Naive thymus-derived CD4-positive, alpha-beta T cell (primary cell): ENCODE measurements at regions of chr3 and their contacts with region 1.

Region 1: DNA sequence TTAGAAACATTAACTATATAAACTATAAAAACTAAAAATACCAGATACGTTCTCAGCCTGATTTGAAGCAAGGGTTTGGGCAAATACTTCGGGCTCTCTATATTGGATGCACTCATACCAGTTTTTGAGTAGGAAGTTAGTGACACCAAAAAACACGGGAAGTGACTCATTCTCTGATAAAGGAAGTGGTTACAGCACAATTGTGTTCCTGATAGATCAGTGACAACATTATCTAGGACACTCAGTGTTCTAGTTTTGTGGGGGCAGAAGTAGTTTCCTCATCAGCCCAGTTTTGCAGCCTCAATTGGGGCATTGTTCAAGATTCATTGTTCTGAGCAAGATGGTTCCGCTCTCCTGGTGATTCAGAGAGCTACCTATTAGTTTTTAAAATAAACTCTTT is 469.6 kb upstream of the DPPA4 start:
- DNase-seq: peak in 8 of 9 donors; percentile 28 to 76 (median 66)
- ATAC-seq: peak; percentile 94
- H3K4me3 ChIP-seq: peak overlapping the region; percentile 4
- H3K4me3 Mint-ChIP-seq: peak overlapping the region; percentile 14 to 88 (median 76)
- H3K27ac ChIP-seq: peak overlapping the region; percentile 52
- H3K27ac Mint-ChIP-seq: peak overlapping the region; percentile 85 to 97 (median 89)
- H3K4me1 ChIP-seq: peaks cover 29 to 44% of the 10 kb centered on the region in 2 donors
- H3K4me1 Mint-ChIP-seq: peaks cover 18 to 62% (median 46%) of the 10 kb centered on the region in 7 donors
- H3K27me3 ChIP-seq: no peaks in the 10 kb centered on the region
- H3K27me3 Mint-ChIP-seq: peaks cover 0 to 7% (median 0%) of the 10 kb centered on the region in 5 donors

Region 2: DNA sequence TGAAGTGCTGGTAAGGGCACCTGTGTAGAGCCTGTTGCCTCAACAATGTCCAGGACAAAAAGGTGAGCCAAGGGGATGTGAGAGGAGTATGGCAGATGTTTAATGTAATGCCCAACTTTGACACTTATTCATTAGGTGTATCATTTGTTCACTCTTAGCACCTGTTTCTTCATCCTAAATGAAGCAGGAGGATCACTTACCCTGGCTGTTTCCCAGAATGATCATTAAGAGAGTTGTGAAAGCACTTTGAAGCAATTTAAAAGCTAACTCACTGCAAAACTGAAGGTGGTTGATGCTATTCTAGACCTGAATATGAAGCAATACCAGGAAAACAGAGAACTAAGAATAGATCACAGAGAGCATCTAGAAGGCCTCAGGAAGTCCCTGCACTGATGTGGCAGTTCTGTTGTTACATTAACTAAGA is 1514.0 kb before region 1 on chr3:
- CTCF ChIA-PET with region 1: no interaction called
- POLR2A ChIA-PET with region 1: no interaction called
- intact Hi-C with region 1: loop called in 1 of 2 experiments (anchors 10 kb)
- DNase-seq: peak in 5 of 9 donors; percentile 26 to 45 (median 33)
- ATAC-seq: peak; percentile 73
- H3K4me3 ChIP-seq: no peak overlapping the region
- H3K4me3 Mint-ChIP-seq: peak overlapping the region in 8 of 10 donors; percentile 0 to 78 (median 37)
- H3K27ac ChIP-seq: peak overlapping the region; percentile 22
- H3K27ac Mint-ChIP-seq: peak overlapping the region in 8 of 9 donors; percentile 7 to 86 (median 60)
- H3K4me1 ChIP-seq: peaks cover 17 to 19% of the 10 kb centered on the region in 2 donors
- H3K4me1 Mint-ChIP-seq: peaks cover 23 to 62% (median 31%) of the 10 kb centered on the region in 7 donors
- H3K27me3 ChIP-seq: no peaks in the 10 kb centered on the region
- H3K27me3 Mint-ChIP-seq: no peaks in the 10 kb centered on the region

Region 3: GRCh38 chr3:109731620-109732473 is 75.1 kb before region 1 on chr3:
- CTCF ChIA-PET with region 1: interaction called, 3 read pairs
- POLR2A ChIA-PET with region 1: no interaction called
- intact Hi-C with region 1: loop called in 1 of 2 experiments (anchors 1 kb)
- DNase-seq: peak; percentile 11 to 68 (median 55)
- ATAC-seq: peak; percentile 87
- H3K4me3 ChIP-seq: no peak overlapping the region
- H3K4me3 Mint-ChIP-seq: no peak overlapping the region
- H3K27ac ChIP-seq: no peak overlapping the region
- H3K27ac Mint-ChIP-seq: no peak overlapping the region
- H3K4me1 ChIP-seq: no peaks in the 10 kb centered on the region
- H3K4me1 Mint-ChIP-seq: peaks cover 0 to 12% (median 4%) of the 10 kb centered on the region in 7 donors
- H3K27me3 ChIP-seq: no peaks in the 10 kb centered on the region
- H3K27me3 Mint-ChIP-seq: no peaks in the 10 kb centered on the region

Region 4: GRCh38 chr3:109784852-109785631 is 21.9 kb before region 1 on chr3:
- CTCF ChIA-PET with region 1: no interaction called
- POLR2A ChIA-PET with region 1: no interaction called
- intact Hi-C with region 1: loop called in 1 of 2 experiments (anchors 2 kb)
- DNase-seq: no peak
- ATAC-seq: no peak
- H3K4me3 ChIP-seq: no peak overlapping the region
- H3K4me3 Mint-ChIP-seq: no peak overlapping the region
- H3K27ac ChIP-seq: no peak overlapping the region
- H3K27ac Mint-ChIP-seq: no peak overlapping the region
- H3K4me1 ChIP-seq: no peaks in the 10 kb centered on the region
- H3K4me1 Mint-ChIP-seq: peaks cover 0 to 6% (median 0%) of the 10 kb centered on the region in 7 donors
- H3K27me3 ChIP-seq: no peaks in the 10 kb centered on the region
- H3K27me3 Mint-ChIP-seq: peaks cover 0 to 5% (median 0%) of the 10 kb centered on the region in 5 donors

Region 5: GRCh38 chr3:110314512-110315114 is 507.7 kb after region 1 on chr3:
- CTCF ChIA-PET with region 1: no interaction called
- POLR2A ChIA-PET with region 1: no interaction called
- intact Hi-C with region 1: loop called in 1 of 2 experiments (anchors 2 kb)
- DNase-seq: peak in 8 of 9 donors; percentile 25 to 66 (median 56)
- ATAC-seq: peak; percentile 76
- H3K4me3 ChIP-seq: no peak overlapping the region
- H3K4me3 Mint-ChIP-seq: peak overlapping the region in 1 of 10 donors; percentile 11
- H3K27ac ChIP-seq: no peak overlapping the region
- H3K27ac Mint-ChIP-seq: no peak overlapping the region
- H3K4me1 ChIP-seq: no peaks in the 10 kb centered on the region
- H3K4me1 Mint-ChIP-seq: peaks cover 0 to 5% (median 0%) of the 10 kb centered on the region in 7 donors
- H3K27me3 ChIP-seq: no peaks in the 10 kb centered on the region
- H3K27me3 Mint-ChIP-seq: peaks cover 0 to 6% (median 0%) of the 10 kb centered on the region in 5 donors

Region 6: DNA sequence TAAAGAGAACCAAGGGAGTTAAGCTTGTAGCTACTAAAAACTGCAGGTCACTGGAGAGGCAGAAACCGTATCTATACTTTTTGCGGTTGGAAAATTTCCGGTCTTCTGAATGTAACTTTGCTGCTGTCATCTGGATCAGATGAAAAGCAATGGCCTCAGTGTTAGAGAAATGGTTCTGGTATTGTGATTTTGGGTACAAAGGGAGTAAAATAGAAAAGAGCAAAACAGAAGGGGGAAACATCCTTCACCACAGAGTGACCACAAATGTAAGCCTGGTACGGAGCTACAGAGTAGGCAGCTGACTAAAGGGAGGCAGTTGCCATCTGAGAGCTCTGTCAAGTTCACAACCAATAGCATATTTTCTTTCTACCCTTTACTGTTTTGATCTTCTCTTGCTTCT is 1740.7 kb after region 1 on chr3:
- CTCF ChIA-PET with region 1: interaction called, 3 read pairs
- POLR2A ChIA-PET with region 1: no interaction called
- intact Hi-C with region 1: loop called (anchors 2 to 5 kb)
- DNase-seq: peak in 8 of 9 donors; percentile 44 to 88 (median 82)
- ATAC-seq: peak; percentile 89
- H3K4me3 ChIP-seq: peak overlapping the region; percentile 48
- H3K4me3 Mint-ChIP-seq: no peak overlapping the region
- H3K27ac ChIP-seq: peak overlapping the region; percentile 94
- H3K27ac Mint-ChIP-seq: no peak overlapping the region
- H3K4me1 ChIP-seq: peaks cover 66 to 81% of the 10 kb centered on the region in 2 donors
- H3K4me1 Mint-ChIP-seq: peaks cover 0 to 34% (median 4%) of the 10 kb centered on the region in 7 donors
- H3K27me3 ChIP-seq: no peaks in the 10 kb centered on the region
- H3K27me3 Mint-ChIP-seq: no peaks in the 10 kb centered on the region

Region 7: DNA sequence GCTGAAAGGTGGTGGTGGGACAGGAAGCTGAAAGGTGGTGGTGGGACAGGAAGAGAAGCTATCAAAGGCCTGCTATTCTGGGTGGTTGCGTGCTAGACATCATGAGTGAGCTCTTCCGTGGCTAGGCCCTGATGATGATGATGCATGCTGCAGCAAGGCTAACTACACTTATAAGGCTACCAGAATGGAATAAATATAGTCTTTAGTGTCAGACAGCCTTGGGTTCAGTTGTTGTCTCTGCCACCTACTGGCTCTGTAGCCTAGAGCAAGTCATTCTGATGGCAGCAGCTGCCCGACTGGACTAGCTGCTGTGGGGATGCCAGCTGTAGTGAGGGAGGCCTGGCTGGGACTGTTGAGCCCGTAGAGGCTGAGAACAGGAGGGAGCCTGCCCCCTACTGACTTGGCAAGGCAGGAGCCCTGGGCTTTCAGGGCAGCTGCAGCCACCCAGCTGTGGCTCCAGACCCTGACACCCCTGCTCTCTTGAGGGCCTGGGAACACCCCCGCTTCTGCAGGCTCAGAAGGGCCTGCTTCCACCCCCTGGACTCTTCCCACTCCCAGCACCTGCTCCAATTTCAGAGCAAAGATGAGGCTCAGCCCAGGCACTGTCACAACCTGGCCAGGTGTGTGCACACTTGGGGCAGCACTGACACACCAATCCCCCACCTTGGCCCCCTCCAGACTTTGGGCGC is 1809.6 kb after region 1 on chr3:
- CTCF ChIA-PET with region 1: no interaction called
- POLR2A ChIA-PET with region 1: no interaction called
- intact Hi-C with region 1: loop called (anchors 5 to 10 kb)
- DNase-seq: peak in 8 of 9 donors; percentile 40 to 71 (median 66)
- ATAC-seq: peak; percentile 92
- H3K4me3 ChIP-seq: no peak overlapping the region
- H3K4me3 Mint-ChIP-seq: peak overlapping the region; percentile 2 to 64 (median 39)
- H3K27ac ChIP-seq: peak overlapping the region; percentile 43
- H3K27ac Mint-ChIP-seq: peak overlapping the region; percentile 52 to 95 (median 78)
- H3K4me1 ChIP-seq: peaks cover 21 to 32% of the 10 kb centered on the region in 2 donors
- H3K4me1 Mint-ChIP-seq: peaks cover 30 to 71% (median 58%) of the 10 kb centered on the region in 7 donors
- H3K27me3 ChIP-seq: no peaks in the 10 kb centered on the region
- H3K27me3 Mint-ChIP-seq: no peaks in the 10 kb centered on the region